Activated B cell treated with CpG ODN at 0.5 μM for 24 hours (primary cell): ENCODE measurements at regions of chr3 and their contacts with region 1.

Region 1: GRCh38 chr3:143066033-143066432 is 53.5 kb upstream of the CHST2 start:
- DNase-seq: no peak
- ATAC-seq: no peak
- H3K4me3 Mint-ChIP-seq: no peak overlapping the region
- H3K27ac Mint-ChIP-seq: no peak overlapping the region
- H3K4me1 Mint-ChIP-seq: peaks cover 1% of the 10 kb centered on the region
- H3K27me3 Mint-ChIP-seq: no peaks in the 10 kb centered on the region
- CTCF ChIP-seq: no peak

Region 2: GRCh38 chr3:141129541-141130011 is 1936.5 kb before region 1 on chr3:
- CTCF ChIA-PET with region 1: no interaction called
- POLR2A ChIA-PET with region 1: interaction called, 10 read pairs
- intact Hi-C with region 1: no loop called
- DNase-seq: no peak
- ATAC-seq: no peak
- H3K4me3 Mint-ChIP-seq: no peak overlapping the region
- H3K27ac Mint-ChIP-seq: no peak overlapping the region
- H3K4me1 Mint-ChIP-seq: no peaks in the 10 kb centered on the region
- H3K27me3 Mint-ChIP-seq: peaks cover 5% of the 10 kb centered on the region
- CTCF ChIP-seq: no peak

Region 3: DNA sequence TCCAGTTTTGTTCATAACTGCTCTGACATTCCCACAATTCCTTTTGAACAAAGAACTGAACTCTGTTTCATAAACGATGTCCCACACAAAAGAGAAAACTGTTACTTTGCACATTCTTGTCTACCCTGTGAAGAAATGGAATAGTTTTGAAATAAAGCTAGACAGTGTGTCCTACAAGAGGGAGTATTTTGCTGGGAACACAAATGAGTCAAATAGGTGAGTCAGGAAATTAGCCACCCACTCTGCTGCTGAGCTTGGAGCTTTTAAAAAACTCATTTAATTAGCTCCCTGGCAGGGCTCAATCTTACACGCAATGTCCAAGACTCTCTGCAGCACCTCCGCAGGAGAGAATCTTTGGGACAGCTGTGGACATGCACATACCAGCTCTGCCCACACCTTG is 588.9 kb after region 1 on chr3:
- CTCF ChIA-PET with region 1: no interaction called
- POLR2A ChIA-PET with region 1: no interaction called
- intact Hi-C with region 1: no loop called
- DNase-seq: no peak
- ATAC-seq: no peak
- H3K4me3 Mint-ChIP-seq: no peak overlapping the region
- H3K27ac Mint-ChIP-seq: no peak overlapping the region
- H3K4me1 Mint-ChIP-seq: no peaks in the 10 kb centered on the region
- H3K27me3 Mint-ChIP-seq: no peaks in the 10 kb centered on the region
- CTCF ChIP-seq: no peak